ENCODE measurements at regions of chr15 and their contacts with region 1.

Region 1: GRCh38 chr15:74787251-74788041 is 5.6 kb downstream of the CSK start:
- DNase-seq: peak; percentile 80
- ATAC-seq: peak; percentile 82
- H3K4me3 Mint-ChIP-seq: no peak overlapping the region
- H3K27ac Mint-ChIP-seq: no peak overlapping the region
- H3K4me1 Mint-ChIP-seq: peaks cover 49% of the 10 kb centered on the region
- H3K27me3 Mint-ChIP-seq: no peaks in the 10 kb centered on the region; the same call in 1 of the 2 replicates
- CTCF ChIP-seq: peak; percentile 35

Region 2: DNA sequence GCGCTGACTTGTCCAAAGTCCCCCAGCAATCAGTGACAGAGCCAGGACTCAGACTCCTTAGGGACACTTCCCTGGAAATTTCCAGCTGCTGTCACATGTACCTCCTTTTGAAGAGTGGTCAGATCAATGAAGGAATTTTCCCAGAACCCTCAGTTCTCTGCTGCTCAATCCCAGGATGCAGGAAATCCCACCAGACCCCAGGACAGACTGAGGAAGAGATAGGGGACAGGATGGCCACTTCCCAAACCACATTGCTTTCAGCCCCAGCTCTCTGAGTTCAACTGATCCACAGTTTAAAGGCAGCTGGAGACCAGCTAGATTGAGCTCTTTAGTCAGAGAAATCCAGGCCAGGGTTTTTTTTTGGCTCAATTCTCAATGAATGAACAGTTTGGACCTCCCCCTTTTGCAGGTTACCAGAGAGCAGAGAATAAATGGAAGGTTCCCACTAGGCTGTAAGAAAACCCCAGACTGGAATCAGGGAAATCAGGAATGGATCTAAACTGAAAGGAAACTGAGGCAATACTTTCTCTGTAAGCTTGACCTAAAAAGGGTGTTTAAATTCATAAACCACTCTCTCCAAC is 63.6 kb before region 1 on chr15:
- CTCF ChIA-PET with region 1: interaction called, 11 read pairs
- POLR2A ChIA-PET with region 1: interaction called, 3 read pairs
- DNase-seq: no peak
- ATAC-seq: peak; percentile 69
- H3K4me3 Mint-ChIP-seq: no peak overlapping the region
- H3K27ac Mint-ChIP-seq: no peak overlapping the region
- H3K4me1 Mint-ChIP-seq: peaks cover 15% of the 10 kb centered on the region
- H3K27me3 Mint-ChIP-seq: peaks cover 65% of the 10 kb centered on the region
- CTCF ChIP-seq: no peak

Region 3: GRCh38 chr15:74799856-74800547 is 12.6 kb after region 1 on chr15:
- CTCF ChIA-PET with region 1: interaction called, 44 read pairs
- POLR2A ChIA-PET with region 1: no interaction called
- DNase-seq: peak; percentile 90
- ATAC-seq: peak; percentile 98
- H3K4me3 Mint-ChIP-seq: no peak overlapping the region
- H3K27ac Mint-ChIP-seq: peak overlapping the region; percentile 36; the same call in 1 of the 2 replicates
- H3K4me1 Mint-ChIP-seq: 0 out of 2 replicates have a peak, but pooled peaks cover 2% of the 10 kb centered on the region
- H3K27me3 Mint-ChIP-seq: no peaks in the 10 kb centered on the region
- CTCF ChIP-seq: peak; percentile 98

Region 4: DNA sequence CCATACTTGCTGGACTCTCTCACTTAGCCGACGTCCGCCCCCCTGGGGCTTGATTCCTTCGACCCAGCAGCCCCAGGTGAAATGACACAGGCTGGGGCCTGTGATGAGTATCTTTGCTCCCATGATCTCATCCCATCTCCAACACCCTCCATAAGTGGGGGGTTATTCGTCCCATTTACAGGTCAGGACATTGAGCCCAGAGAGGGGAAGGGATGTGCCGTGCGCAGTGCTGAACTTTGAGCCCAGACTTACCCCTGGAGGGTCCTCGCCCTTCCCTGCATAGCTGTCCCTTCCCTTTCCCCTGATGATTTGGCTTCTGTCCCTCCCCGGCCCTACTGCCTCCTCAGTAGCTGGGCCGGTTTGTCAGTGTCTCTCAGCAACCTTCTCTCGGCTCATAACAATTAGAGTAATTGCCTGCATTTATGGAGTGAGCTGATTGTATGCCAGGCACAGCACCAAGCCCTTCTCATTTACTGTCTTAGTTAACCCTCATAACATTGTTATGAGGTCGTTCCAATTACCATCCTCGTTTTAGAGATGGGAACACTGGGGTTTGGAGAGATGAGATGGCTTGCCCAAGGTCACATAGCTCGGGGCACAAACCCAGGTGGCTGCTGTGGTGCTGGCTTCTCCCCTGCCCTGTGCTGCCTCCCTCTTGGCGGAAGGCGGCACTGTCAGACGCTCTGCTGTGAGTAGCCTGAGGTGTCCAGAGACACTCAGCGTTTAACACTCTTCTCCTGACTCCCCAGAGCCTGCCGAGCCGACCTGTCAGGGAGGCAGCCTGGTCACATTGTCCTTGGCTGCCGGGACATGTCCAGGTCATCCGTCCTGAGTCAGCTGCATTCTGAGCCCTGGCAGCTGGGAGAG is 29.6 kb after region 1 on chr15:
- CTCF ChIA-PET with region 1: interaction called, 12 read pairs
- POLR2A ChIA-PET with region 1: no interaction called
- DNase-seq: no peak
- ATAC-seq: peak; percentile 61
- H3K4me3 Mint-ChIP-seq: no peak overlapping the region
- H3K27ac Mint-ChIP-seq: peak overlapping the region; percentile 79
- H3K4me1 Mint-ChIP-seq: peaks cover 20% of the 10 kb centered on the region
- H3K27me3 Mint-ChIP-seq: no peaks in the 10 kb centered on the region; the same call in 1 of the 2 replicates
- CTCF ChIP-seq: no peak

Region 5: GRCh38 chr15:74842581-74843444 is 55.4 kb after region 1 on chr15 and contains the start of gene ULK3:
- CTCF ChIA-PET with region 1: interaction called, 14 read pairs
- POLR2A ChIA-PET with region 1: no interaction called
- DNase-seq: peak; percentile 87
- ATAC-seq: peak; percentile 87
- H3K4me3 Mint-ChIP-seq: peak within 1 kb of the TSS; percentile 87
- H3K27ac Mint-ChIP-seq: peak within 1 kb of the TSS; percentile 91
- H3K4me1 Mint-ChIP-seq: peaks cover 21% of the 10 kb centered on the region
- H3K27me3 Mint-ChIP-seq: no peaks in the 10 kb centered on the region
- CTCF ChIP-seq: peak; percentile 76
- total RNA-seq, gene ULK3: 34.4 to 38.9 TPM (median 37.4 TPM) in 3 replicates

Measured in WTC11 (cell line).